Activated T-helper 1 cell treated with anti-CD3 and anti-CD28 coated beads, Interleukin-12 subunit alpha, Interleukin-12 subunit beta, Interleukin-2, Interleukin-4 antibody, amounts not matched to agents 30 ng/mL and 10 ng/mL and 1 ng/mL, durations not matched to agents 14 hours and 24 hours and 36 hours (primary cell): ENCODE measurements at regions of chr3 and their contacts with region 1.

Region 1: GRCh38 chr3:71423151-71423906 is 160.2 kb downstream of the FOXP1 start:
- DNase-seq: no peak
- H3K4me3 Mint-ChIP-seq: no peak overlapping the region
- H3K27ac Mint-ChIP-seq: no peak overlapping the region
- H3K4me1 Mint-ChIP-seq: peaks cover 22% of the 10 kb centered on the region
- H3K27me3 Mint-ChIP-seq: peaks cover 61% of the 10 kb centered on the region

Region 2: DNA sequence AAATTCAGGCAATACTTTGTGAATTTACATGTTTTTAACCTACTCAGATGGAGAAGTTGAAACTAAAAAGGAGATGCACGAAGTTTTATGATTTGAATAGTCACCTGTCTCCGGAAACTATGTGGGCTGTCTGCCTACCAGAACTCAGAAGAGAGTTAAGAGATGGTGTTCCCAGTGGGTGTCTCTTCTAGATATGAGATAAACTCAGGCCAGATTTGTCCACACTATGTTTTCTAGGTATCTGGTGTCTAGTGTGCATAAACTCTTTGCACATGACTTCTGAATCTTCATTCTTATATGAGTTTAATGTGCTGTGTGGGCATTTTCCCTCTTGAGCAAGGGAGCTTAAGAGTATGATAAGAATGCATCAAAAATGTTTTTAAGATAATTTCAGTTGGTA is 62.6 kb before region 1 on chr3:
- intact Hi-C with region 1: loop called (anchors 1 kb)
- DNase-seq: no peak
- H3K4me3 Mint-ChIP-seq: no peak overlapping the region
- H3K27ac Mint-ChIP-seq: peak overlapping the region; percentile 80
- H3K4me1 Mint-ChIP-seq: peaks cover 19% of the 10 kb centered on the region
- H3K27me3 Mint-ChIP-seq: peaks cover 25% of the 10 kb centered on the region

Region 3: GRCh38 chr3:71389911-71390573 is 33.3 kb before region 1 on chr3:
- intact Hi-C with region 1: loop called (anchors 1 kb)
- DNase-seq: no peak
- H3K4me3 Mint-ChIP-seq: peak overlapping the region; percentile 10
- H3K27ac Mint-ChIP-seq: peak overlapping the region; percentile 27
- H3K4me1 Mint-ChIP-seq: peaks cover 33% of the 10 kb centered on the region
- H3K27me3 Mint-ChIP-seq: peaks cover 18% of the 10 kb centered on the region

Region 4: GRCh38 chr3:71444028-71444860 is 20.9 kb after region 1 on chr3:
- intact Hi-C with region 1: loop called (anchors 1 kb)
- DNase-seq: peak; percentile 71
- H3K4me3 Mint-ChIP-seq: peak overlapping the region; percentile 74
- H3K27ac Mint-ChIP-seq: peak overlapping the region; percentile 95
- H3K4me1 Mint-ChIP-seq: peaks cover 73% of the 10 kb centered on the region
- H3K27me3 Mint-ChIP-seq: peaks cover 8% of the 10 kb centered on the region

Region 5: DNA sequence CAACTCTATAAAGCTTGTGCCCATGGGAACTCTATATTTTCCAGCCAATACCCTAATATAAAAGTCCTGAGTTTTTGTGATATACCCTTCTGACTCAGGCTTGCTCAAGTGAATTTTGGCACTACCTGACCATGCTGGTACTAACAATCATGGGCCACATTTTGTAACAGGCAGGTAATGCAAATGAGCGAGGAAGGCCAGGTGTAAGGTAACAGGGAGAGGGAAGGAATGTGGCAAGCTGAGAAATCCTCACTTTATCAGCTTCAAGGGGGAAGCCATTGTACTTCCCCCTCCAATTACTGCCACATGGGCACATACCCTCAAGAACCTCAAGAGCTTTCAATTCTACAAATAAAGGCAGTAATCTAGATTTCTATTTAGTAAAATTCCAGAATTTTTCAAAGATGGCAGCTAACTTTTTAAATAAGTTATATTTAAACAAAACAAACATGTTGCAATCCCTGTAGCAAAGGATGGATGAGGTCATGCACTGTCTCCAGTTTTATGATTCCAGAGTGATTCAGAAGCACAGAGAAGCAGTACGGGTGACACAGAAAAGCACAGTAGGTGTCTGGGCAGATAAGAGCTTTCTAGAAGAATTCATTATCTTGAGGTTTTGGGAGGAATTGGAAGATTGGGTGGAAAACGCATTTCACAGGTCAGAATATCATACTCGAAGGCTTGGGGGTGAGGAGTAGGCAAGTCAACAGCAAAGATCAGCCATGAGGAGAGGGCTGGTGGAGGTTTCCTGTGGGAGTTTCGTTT is 72.6 kb after region 1 on chr3:
- intact Hi-C with region 1: loop called (anchors 2 kb)
- DNase-seq: peak; percentile 4
- H3K4me3 Mint-ChIP-seq: peak overlapping the region; percentile 22
- H3K27ac Mint-ChIP-seq: peak overlapping the region; percentile 40
- H3K4me1 Mint-ChIP-seq: peaks cover 57% of the 10 kb centered on the region
- H3K27me3 Mint-ChIP-seq: peaks cover 6% of the 10 kb centered on the region